OCI-LY7 (cell line): ENCODE measurements at regions of chr11 and their contacts with region 1.

Region 1: GRCh38 chr11:60477035-60477445 is 15.5 kb upstream of the MS4A12 start:
- DNase-seq: peak; percentile 94
- H3K4me3 ChIP-seq: peak overlapping the region; percentile 46
- H3K27ac ChIP-seq: peak overlapping the region; percentile 95
- H3K4me1 ChIP-seq: peaks cover 59% of the 10 kb centered on the region
- CTCF ChIP-seq: no peak

Region 2: DNA sequence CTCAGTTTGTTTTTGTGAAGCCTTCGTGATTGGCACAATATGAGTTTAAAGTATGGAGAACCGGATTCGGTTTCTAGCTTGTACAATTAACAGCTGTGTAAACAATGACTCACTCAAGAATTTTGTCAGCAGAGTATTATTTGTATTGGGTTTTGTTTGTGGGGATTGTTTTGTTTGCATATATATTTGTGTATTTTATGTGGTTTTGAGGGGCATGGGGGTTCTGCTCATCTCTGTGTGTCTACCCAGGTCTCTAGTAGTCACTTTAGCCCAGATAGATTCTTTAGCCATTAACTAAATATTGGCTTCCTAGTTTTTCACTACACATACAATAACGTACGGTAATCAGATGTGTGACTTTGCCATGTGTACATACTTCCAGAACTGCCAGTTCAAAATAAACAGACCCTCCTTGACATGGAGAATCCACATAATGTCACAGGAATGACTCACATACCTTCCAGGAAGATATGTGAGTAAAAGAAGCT is 106.2 kb before region 1 on chr11:
- CTCF ChIA-PET with region 1: no interaction called
- POLR2A ChIA-PET with region 1: interaction called, 12 read pairs
- intact Hi-C with region 1: no loop called
- DNase-seq: no peak
- H3K4me3 ChIP-seq: no peak overlapping the region
- H3K27ac ChIP-seq: no peak overlapping the region
- H3K4me1 ChIP-seq: peaks cover 23% of the 10 kb centered on the region
- CTCF ChIP-seq: no peak